ENCODE measurements at regions of chr4 and their contacts with region 1.

Region 1: GRCh38 chr4:120977435-120977997 is 55.0 kb upstream of the PRDM5 start:
- DNase-seq: peak in 2 of 9 experiments; percentile 38 to 50
- ATAC-seq: peak; percentile 64
- H3K4me3 ChIP-seq: no peak overlapping the region
- H3K4me3 Mint-ChIP-seq: no peak overlapping the region
- H3K27ac ChIP-seq: no peak overlapping the region
- H3K27ac Mint-ChIP-seq: no peak overlapping the region
- H3K4me1 ChIP-seq: no peaks in the 10 kb centered on the region
- H3K4me1 Mint-ChIP-seq: peaks cover 2% of the 10 kb centered on the region
- H3K27me3 ChIP-seq: no peaks in the 10 kb centered on the region
- H3K27me3 Mint-ChIP-seq: no peaks in the 10 kb centered on the region
- CTCF ChIP-seq: peak; percentile 45

Region 2: GRCh38 chr4:120850018-120850599 is 127.4 kb before region 1 on chr4:
- CTCF ChIA-PET with region 1: no interaction called
- POLR2A ChIA-PET with region 1: no interaction called
- intact Hi-C with region 1: no loop called
- DNase-seq: no peak
- ATAC-seq: no peak
- H3K4me3 ChIP-seq: no peak overlapping the region
- H3K4me3 Mint-ChIP-seq: no peak overlapping the region
- H3K27ac ChIP-seq: no peak overlapping the region
- H3K27ac Mint-ChIP-seq: no peak overlapping the region
- H3K4me1 ChIP-seq: no peaks in the 10 kb centered on the region
- H3K4me1 Mint-ChIP-seq: no peaks in the 10 kb centered on the region
- H3K27me3 ChIP-seq: no peaks in the 10 kb centered on the region
- H3K27me3 Mint-ChIP-seq: peaks cover 3% of the 10 kb centered on the region
- CTCF ChIP-seq: no peak

Region 3: GRCh38 chr4:121034015-121034414 is 56.5 kb after region 1 on chr4:
- CTCF ChIA-PET with region 1: no interaction called
- POLR2A ChIA-PET with region 1: no interaction called
- intact Hi-C with region 1: loop called in 1 of 2 experiments (anchors 10 kb)
- DNase-seq: no peak
- ATAC-seq: no peak
- H3K4me3 ChIP-seq: no peak overlapping the region
- H3K4me3 Mint-ChIP-seq: no peak overlapping the region
- H3K27ac ChIP-seq: no peak overlapping the region
- H3K27ac Mint-ChIP-seq: no peak overlapping the region
- H3K4me1 ChIP-seq: peaks cover 6% of the 10 kb centered on the region
- H3K4me1 Mint-ChIP-seq: peaks cover 11% of the 10 kb centered on the region
- H3K27me3 ChIP-seq: no peaks in the 10 kb centered on the region
- H3K27me3 Mint-ChIP-seq: no peaks in the 10 kb centered on the region
- CTCF ChIP-seq: no peak